Panc1 (cell line): ENCODE measurements at regions of chr18 and their contacts with region 1.

Region 1: DNA sequence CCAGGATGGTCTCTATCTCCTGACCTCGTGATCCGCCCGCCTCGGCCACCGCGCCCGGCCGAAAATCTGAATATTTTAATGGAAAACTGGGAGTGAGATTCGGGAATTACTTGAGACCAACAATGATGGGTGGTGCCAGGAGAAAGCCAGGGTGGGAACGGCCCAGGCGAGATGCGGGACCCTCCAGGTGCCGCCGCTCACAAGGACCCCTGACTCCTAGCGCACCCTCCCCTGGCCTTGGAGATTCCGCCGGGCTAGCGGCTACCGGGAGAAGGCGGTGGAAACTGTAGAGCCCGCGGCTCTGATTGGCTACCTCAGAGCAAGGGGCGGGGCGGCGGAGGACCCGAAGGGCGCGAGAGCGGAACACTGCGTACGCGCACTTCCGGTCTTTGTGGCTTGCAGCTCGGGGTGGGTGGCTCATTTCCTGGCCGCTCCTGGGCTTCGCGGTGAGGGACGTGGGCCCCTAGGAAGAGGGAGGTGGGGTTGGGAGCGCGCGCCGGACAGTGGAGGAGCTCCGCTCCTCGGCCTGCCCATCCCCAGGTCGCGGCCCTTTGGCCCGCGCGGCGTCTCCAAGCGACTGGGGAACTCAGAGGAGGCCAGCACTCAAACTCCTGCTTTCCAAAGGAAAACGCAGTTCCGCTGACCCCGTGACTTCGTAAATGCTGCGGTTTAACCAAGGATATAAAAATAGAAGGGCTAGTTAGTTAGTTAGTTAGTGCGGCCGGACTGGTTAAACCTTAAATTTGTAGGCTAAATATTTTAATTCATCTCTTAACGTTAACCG is at the start of gene ZNF397:
- DNase-seq: peak; percentile 57
- ATAC-seq: peak; percentile 100
- H3K4me3 ChIP-seq: peak within 1 kb of the TSS; percentile 52 to 78
- H3K27ac ChIP-seq: peak within 1 kb of the TSS; percentile 93
- H3K4me1 ChIP-seq: peaks cover 3% of the 10 kb centered on the region; the same call in 1 of the 2 replicates
- H3K27me3 ChIP-seq: no peaks in the 10 kb centered on the region
- CTCF ChIP-seq: no peak
- total RNA-seq, gene ZNF397: 9.8 TPM

Region 2: DNA sequence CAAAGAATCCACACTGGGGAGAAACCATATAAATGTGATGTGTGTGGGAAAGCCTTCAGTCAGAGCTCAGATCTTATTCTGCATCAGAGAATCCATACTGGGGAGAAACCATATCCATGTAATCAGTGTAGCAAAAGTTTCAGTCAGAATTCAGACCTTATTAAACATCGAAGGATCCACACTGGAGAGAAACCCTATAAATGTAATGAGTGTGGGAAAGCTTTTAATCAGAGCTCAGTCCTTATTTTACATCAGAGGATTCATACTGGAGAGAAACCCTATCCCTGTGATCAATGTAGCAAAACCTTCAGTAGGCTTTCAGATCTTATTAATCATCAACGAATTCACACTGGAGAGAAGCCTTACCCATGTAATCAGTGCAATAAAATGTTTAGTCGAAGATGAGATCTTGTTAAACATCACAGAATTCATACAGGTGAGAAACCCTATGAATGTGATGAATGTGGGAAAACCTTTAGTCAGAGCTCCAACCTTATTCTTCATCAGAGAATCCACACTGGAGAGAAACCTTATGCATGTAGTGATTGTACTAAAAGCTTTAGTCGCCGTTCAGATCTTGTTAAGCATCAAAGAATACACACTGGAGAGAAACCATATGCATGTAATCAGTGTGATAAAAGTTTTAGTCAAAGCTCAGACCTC is 65.9 kb after region 1 on chr18:
- CTCF ChIA-PET with region 1: no interaction called
- POLR2A ChIA-PET with region 1: no interaction called
- in situ Hi-C with region 1: no loop called
- intact Hi-C with region 1: loop called (anchors 10 kb)
- DNase-seq: no peak
- ATAC-seq: no peak
- H3K4me3 ChIP-seq: no peak overlapping the region
- H3K27ac ChIP-seq: no peak overlapping the region
- H3K4me1 ChIP-seq: no peaks in the 10 kb centered on the region
- H3K27me3 ChIP-seq: no peaks in the 10 kb centered on the region
- CTCF ChIP-seq: no peak

Region 3: GRCh38 chr18:35637226-35637625 is 396.4 kb after region 1 on chr18:
- CTCF ChIA-PET with region 1: no interaction called
- POLR2A ChIA-PET with region 1: interaction called, 11 read pairs
- in situ Hi-C with region 1: no loop called
- intact Hi-C with region 1: no loop called
- DNase-seq: no peak
- ATAC-seq: no peak
- H3K4me3 ChIP-seq: no peak overlapping the region
- H3K27ac ChIP-seq: no peak overlapping the region
- H3K4me1 ChIP-seq: peaks cover 16% of the 10 kb centered on the region
- H3K27me3 ChIP-seq: no peaks in the 10 kb centered on the region
- CTCF ChIP-seq: no peak

Region 4: GRCh38 chr18:36828630-36829361 is 1587.9 kb after region 1 on chr18 and contains the starts of genes KIAA1328 and TPGS2:
- CTCF ChIA-PET with region 1: no interaction called
- POLR2A ChIA-PET with region 1: no interaction called
- in situ Hi-C with region 1: no loop called
- intact Hi-C with region 1: no loop called
- DNase-seq: no peak
- ATAC-seq: peak; percentile 96
- H3K4me3 ChIP-seq: peak within 1 kb of the TSS; percentile 73 to 90
- H3K27ac ChIP-seq: peak within 1 kb of the TSS; percentile 88
- H3K4me1 ChIP-seq: peaks cover 10% of the 10 kb centered on the region
- H3K27me3 ChIP-seq: no peaks in the 10 kb centered on the region
- CTCF ChIP-seq: peak; percentile 68
- total RNA-seq, gene KIAA1328: 6.2 TPM
- total RNA-seq, gene TPGS2: 98.7 TPM